Naive thymus-derived CD4-positive, alpha-beta T cell (primary cell): ENCODE measurements at regions of chr1 and their contacts with region 1.

Region 1: DNA sequence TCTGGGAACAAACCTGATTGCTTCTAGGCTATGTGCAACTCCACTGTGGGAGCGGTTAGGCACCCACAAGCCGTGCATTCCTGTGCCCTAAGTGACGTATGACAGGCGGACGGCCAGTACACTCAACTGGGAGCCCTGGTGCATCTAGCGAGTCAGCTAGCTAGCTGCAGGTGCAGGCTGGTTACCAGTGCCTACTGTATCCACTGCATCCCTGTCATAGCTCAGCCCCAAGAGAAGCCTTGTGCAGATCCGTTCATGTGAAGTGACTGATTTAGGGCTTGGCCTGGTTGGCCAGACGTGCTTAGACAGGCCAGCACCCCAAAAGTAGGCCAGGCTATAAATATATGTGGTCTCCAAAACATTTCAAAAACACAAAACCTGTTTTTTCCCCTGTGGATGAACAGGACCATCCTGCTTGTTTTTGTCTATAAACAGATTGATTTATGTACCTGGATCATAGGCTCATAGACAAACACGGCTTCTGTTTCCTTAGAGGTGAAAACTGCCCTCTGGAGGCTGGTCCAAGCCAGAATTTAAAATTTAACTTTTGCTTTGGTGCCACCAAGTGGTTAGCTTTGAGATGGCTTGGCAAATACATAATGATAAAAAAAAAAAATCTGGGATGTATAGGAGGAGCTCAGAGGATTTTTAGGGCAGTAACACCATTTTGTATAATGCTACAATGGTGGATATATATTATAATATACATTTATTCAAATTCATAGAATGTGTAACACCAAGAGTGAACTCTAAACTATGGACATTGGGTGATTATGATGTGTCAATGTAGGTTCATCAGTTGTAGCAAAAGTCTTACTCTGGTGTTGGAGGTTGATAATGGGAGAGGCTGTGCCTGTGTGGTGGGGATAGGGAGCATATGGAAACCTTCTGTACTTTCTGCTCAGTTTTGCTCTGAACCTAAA is 68.5 kb downstream of the GIPC2 start:
- DNase-seq: peak; percentile 15 to 71 (median 58)
- ATAC-seq: peak; percentile 93
- H3K4me3 ChIP-seq: no peak overlapping the region
- H3K4me3 Mint-ChIP-seq: no peak overlapping the region
- H3K27ac ChIP-seq: no peak overlapping the region
- H3K27ac Mint-ChIP-seq: no peak overlapping the region
- H3K4me1 ChIP-seq: no peaks in the 10 kb centered on the region
- H3K4me1 Mint-ChIP-seq: peaks cover 0 to 9% (median 0%) of the 10 kb centered on the region in 7 donors
- H3K27me3 ChIP-seq: no peaks in the 10 kb centered on the region
- H3K27me3 Mint-ChIP-seq: peaks cover 0 to 2% (median 0%) of the 10 kb centered on the region in 5 donors

Region 2: GRCh38 chr1:76330991-76331603 is 1783.2 kb before region 1 on chr1:
- CTCF ChIA-PET with region 1: no interaction called
- POLR2A ChIA-PET with region 1: no interaction called
- intact Hi-C with region 1: loop called in 1 of 2 experiments (anchors 5 kb)
- DNase-seq: peak in 7 of 9 donors; percentile 19 to 56 (median 51)
- ATAC-seq: peak; percentile 63
- H3K4me3 ChIP-seq: no peak overlapping the region
- H3K4me3 Mint-ChIP-seq: no peak overlapping the region
- H3K27ac ChIP-seq: no peak overlapping the region
- H3K27ac Mint-ChIP-seq: peak overlapping the region in 1 of 9 donors; percentile 16
- H3K4me1 ChIP-seq: no peaks in the 10 kb centered on the region
- H3K4me1 Mint-ChIP-seq: peaks cover 0 to 41% (median 14%) of the 10 kb centered on the region in 7 donors
- H3K27me3 ChIP-seq: no peaks in the 10 kb centered on the region
- H3K27me3 Mint-ChIP-seq: no peaks in the 10 kb centered on the region

Region 3: GRCh38 chr1:77533660-77534305 is 580.5 kb before region 1 on chr1:
- CTCF ChIA-PET with region 1: no interaction called
- POLR2A ChIA-PET with region 1: no interaction called
- intact Hi-C with region 1: loop called in 1 of 2 experiments (anchors 5 kb)
- DNase-seq: peak; percentile 34 to 75 (median 60)
- ATAC-seq: peak; percentile 71
- H3K4me3 ChIP-seq: no peak overlapping the region
- H3K4me3 Mint-ChIP-seq: peak overlapping the region in 6 of 10 donors; percentile 22 to 69 (median 50)
- H3K27ac ChIP-seq: no peak overlapping the region
- H3K27ac Mint-ChIP-seq: peak overlapping the region in 8 of 9 donors; percentile 16 to 94 (median 38)
- H3K4me1 ChIP-seq: peaks cover 0 to 4% of the 10 kb centered on the region in 2 donors
- H3K4me1 Mint-ChIP-seq: peaks cover 2 to 16% (median 10%) of the 10 kb centered on the region in 7 donors
- H3K27me3 ChIP-seq: no peaks in the 10 kb centered on the region
- H3K27me3 Mint-ChIP-seq: no peaks in the 10 kb centered on the region

Region 4: GRCh38 chr1:77744576-77744975 is 369.7 kb before region 1 on chr1:
- CTCF ChIA-PET with region 1: no interaction called
- POLR2A ChIA-PET with region 1: no interaction called
- intact Hi-C with region 1: loop called in 1 of 2 experiments (anchors 5 kb)
- DNase-seq: peak in 1 of 9 donors; percentile 12
- ATAC-seq: no peak
- H3K4me3 ChIP-seq: no peak overlapping the region
- H3K4me3 Mint-ChIP-seq: peak overlapping the region in 2 of 10 donors; percentile 20 to 24
- H3K27ac ChIP-seq: no peak overlapping the region
- H3K27ac Mint-ChIP-seq: peak overlapping the region in 6 of 9 donors; percentile 10 to 57 (median 40)
- H3K4me1 ChIP-seq: peaks cover 0 to 4% of the 10 kb centered on the region in 2 donors
- H3K4me1 Mint-ChIP-seq: peaks cover 13 to 70% (median 60%) of the 10 kb centered on the region in 7 donors
- H3K27me3 ChIP-seq: no peaks in the 10 kb centered on the region
- H3K27me3 Mint-ChIP-seq: no peaks in the 10 kb centered on the region

Region 5: GRCh38 chr1:77825131-77825709 is 289.1 kb before region 1 on chr1:
- CTCF ChIA-PET with region 1: interaction called, 3 read pairs
- POLR2A ChIA-PET with region 1: no interaction called
- intact Hi-C with region 1: loop called (anchors 1 kb)
- DNase-seq: peak in 2 of 9 donors; percentile 3 to 7
- ATAC-seq: peak; percentile 67
- H3K4me3 ChIP-seq: no peak overlapping the region
- H3K4me3 Mint-ChIP-seq: no peak overlapping the region
- H3K27ac ChIP-seq: no peak overlapping the region
- H3K27ac Mint-ChIP-seq: no peak overlapping the region
- H3K4me1 ChIP-seq: no peaks in the 10 kb centered on the region
- H3K4me1 Mint-ChIP-seq: peaks cover 0 to 11% (median 4%) of the 10 kb centered on the region in 7 donors
- H3K27me3 ChIP-seq: no peaks in the 10 kb centered on the region
- H3K27me3 Mint-ChIP-seq: no peaks in the 10 kb centered on the region

Region 6: GRCh38 chr1:78092686-78093085 is 21.6 kb before region 1 on chr1:
- CTCF ChIA-PET with region 1: no interaction called
- POLR2A ChIA-PET with region 1: no interaction called
- intact Hi-C with region 1: no loop called
- DNase-seq: no peak
- ATAC-seq: no peak
- H3K4me3 ChIP-seq: no peak overlapping the region
- H3K4me3 Mint-ChIP-seq: no peak overlapping the region
- H3K27ac ChIP-seq: no peak overlapping the region
- H3K27ac Mint-ChIP-seq: no peak overlapping the region
- H3K4me1 ChIP-seq: no peaks in the 10 kb centered on the region
- H3K4me1 Mint-ChIP-seq: no peaks in the 10 kb centered on the region
- H3K27me3 ChIP-seq: no peaks in the 10 kb centered on the region
- H3K27me3 Mint-ChIP-seq: peaks cover 0 to 18% (median 10%) of the 10 kb centered on the region in 5 donors